ENCODE measurements at regions of chr1 and their contacts with region 1.

Region 1: DNA sequence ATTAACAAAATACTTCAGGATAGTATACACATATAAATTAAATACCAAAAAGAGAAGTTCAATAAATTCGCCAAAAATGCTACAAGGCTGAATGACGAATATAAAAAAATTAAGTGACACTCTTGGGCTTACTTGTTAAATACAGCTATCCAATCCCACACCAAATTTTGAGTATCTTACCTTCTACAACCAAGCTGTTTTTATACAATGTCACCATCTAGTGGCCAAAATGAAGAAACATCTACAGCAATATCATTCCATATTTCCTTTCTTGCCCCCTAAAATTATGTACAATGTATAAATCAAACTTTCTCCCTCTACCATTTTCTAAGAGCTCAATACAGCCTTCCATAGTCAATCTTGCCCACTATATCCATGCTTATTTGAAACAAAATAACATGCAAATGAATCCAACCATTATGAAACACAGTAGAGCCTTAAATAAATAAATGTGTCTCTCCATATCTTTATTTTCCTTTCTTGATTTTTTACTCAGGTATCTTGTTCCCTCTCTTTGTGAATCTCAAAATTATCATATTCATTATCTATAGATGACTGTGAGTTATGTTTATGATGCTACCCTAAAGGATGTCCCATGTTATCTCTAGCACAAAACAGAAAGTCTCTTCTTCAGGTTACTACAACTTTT is 86.3 kb downstream of the ACBD6 start:
- DNase-seq: peak; percentile 51
- H3K4me3 ChIP-seq: no peak overlapping the region; a peak in 1 of 4 replicates
- H3K27ac ChIP-seq: no peak overlapping the region
- H3K4me1 ChIP-seq: no peaks in the 10 kb centered on the region
- H3K27me3 ChIP-seq: no peaks in the 10 kb centered on the region
- CTCF ChIP-seq: peak; percentile 71
- EP300 ChIP-seq: no peak
- RAD21 ChIP-seq: peak; percentile 80

Region 2: DNA sequence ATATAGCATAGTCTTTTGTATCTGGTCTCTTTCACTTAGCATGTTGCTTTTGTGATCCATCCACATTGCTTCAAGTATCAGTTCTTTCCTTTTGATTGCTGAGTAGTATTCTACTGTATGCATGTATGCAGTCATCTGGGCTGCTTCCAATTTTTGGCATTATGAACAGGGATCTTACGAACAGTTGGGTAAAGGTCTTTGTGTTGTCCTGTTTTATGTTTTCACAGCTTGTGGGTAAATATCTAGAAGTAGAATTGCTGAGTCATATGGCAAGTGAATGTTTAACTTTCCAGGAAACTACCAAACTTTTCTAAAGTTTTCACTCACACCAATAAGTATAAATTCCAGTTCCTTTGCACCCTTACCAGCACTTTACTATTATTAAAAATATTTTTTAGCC is 125.1 kb before region 1 on chr1:
- CTCF ChIA-PET with region 1: no interaction called
- POLR2A ChIA-PET with region 1: no interaction called
- DNase-seq: no peak
- H3K4me3 ChIP-seq: no peak overlapping the region
- H3K27ac ChIP-seq: no peak overlapping the region
- H3K4me1 ChIP-seq: peaks cover 0 to 5% of the 10 kb centered on the region in 2 experiments; a peak in 2 of 4 replicates
- H3K27me3 ChIP-seq: no peaks in the 10 kb centered on the region
- CTCF ChIP-seq: no peak
- EP300 ChIP-seq: no peak
- RAD21 ChIP-seq: no peak

Region 3: DNA sequence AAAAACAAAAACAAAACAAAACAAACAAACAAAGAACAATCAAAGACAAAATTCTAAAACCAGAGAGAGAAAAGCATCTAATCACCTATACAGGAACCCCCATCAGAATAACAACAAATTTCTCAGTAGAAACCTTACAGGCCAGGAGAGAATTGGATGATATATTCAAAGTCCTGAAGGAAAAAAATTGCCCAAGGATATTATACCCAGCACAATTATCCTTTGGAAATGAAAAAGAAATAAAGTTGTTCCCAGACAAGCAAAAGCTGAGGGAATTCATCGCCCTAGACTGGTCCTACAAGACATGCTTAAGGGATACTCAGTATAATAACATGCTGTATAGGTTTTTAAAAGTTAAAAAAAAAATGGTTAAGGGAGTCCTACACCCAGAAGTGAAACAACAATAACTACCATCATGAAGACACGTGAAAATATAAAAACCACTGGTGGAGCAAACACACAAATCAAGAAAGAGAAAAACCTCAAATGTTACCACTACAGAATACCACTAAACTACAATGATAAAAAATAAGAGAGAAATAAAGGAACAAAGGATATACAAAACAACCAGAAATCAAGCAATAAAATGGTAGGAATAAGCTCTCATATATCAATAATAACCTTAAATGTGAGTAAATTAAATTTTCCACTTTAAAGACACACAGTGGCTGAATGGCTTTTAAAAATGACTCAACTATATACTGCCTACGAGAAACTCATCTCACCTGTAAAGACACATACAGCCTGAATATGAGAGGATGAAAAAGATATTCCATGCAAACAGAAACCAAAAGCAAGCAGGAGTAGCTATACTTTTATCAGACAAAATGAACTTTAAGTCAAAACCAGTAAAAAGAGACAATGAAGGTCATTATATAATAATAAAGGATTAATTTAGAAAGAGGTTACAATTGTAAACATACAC is 35.6 kb before region 1 on chr1:
- CTCF ChIA-PET with region 1: no interaction called
- POLR2A ChIA-PET with region 1: no interaction called
- DNase-seq: no peak
- H3K4me3 ChIP-seq: no peak overlapping the region
- H3K27ac ChIP-seq: no peak overlapping the region
- H3K4me1 ChIP-seq: no peaks in the 10 kb centered on the region
- H3K27me3 ChIP-seq: no peaks in the 10 kb centered on the region
- CTCF ChIP-seq: no peak
- EP300 ChIP-seq: no peak
- RAD21 ChIP-seq: no peak

Region 4: DNA sequence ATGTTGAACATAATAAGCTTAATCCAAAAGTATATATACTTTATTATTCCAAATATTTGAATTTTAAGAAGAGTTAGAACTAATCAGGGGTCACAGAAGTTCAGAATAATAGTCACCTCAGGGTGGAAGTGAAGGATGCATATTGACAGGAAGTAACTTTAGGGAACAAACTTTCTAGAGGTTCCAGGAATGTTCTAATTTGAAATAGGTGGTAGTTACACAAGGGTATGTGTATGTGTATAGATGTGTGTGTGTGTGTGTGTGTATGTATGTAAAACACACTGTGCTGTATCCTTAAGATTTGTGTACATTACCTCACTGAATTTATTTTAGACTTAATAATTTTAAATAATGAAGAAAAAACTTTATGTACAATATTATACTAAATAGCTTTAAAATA is 24.1 kb before region 1 on chr1:
- CTCF ChIA-PET with region 1: interaction called, 11 read pairs
- POLR2A ChIA-PET with region 1: no interaction called
- DNase-seq: no peak
- H3K4me3 ChIP-seq: no peak overlapping the region
- H3K27ac ChIP-seq: no peak overlapping the region
- H3K4me1 ChIP-seq: peaks cover 0 to 2% of the 10 kb centered on the region in 2 experiments; a peak in 2 of 4 replicates
- H3K27me3 ChIP-seq: no peaks in the 10 kb centered on the region
- CTCF ChIP-seq: no peak
- EP300 ChIP-seq: no peak
- RAD21 ChIP-seq: no peak

Region 5: GRCh38 chr1:180598333-180598974 is 182.3 kb after region 1 on chr1:
- CTCF ChIA-PET with region 1: no interaction called
- POLR2A ChIA-PET with region 1: no interaction called
- DNase-seq: peak; percentile 30
- H3K4me3 ChIP-seq: no peak overlapping the region
- H3K27ac ChIP-seq: peak overlapping the region in 1 of 2 experiments; percentile 66; a peak in 1 of 4 replicates
- H3K4me1 ChIP-seq: peaks cover 0 to 38% of the 10 kb centered on the region in 2 experiments; a peak in 2 of 4 replicates
- H3K27me3 ChIP-seq: no peaks in the 10 kb centered on the region
- CTCF ChIP-seq: no peak
- EP300 ChIP-seq: peak in 1 of 2 experiments; percentile 64; a peak in 2 of 4 replicates
- RAD21 ChIP-seq: no peak